Posterior vena cava (tissue), 2 donors: ENCODE measurements at regions of chr20 and their contacts with region 1.

Region 1: DNA sequence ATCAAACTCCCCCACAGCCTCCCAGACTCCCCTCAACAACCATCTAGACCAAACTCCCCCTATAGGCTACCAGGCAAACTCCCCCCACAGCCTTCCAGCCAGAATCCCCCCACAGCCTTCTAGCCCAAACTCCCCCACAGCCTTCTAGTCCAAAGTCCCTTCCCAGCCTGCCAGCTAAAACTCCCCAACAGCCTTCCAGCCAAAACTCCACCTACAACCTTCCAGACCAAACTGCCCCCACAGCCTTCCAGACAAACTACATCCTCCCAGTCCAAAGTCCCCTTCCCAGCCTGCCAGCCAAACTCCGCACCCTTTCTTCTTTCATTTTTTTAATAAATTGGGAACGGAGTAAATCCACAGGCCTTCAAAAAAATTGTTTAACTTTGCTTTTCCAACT is 37.4 kb upstream of the SYNDIG1 start:
- DNase-seq: no peak

Region 2: GRCh38 chr20:24469116-24469893 is 37.3 kb after region 1 on chr20 and contains the start of gene SYNDIG1:
- intact Hi-C with region 1: loop called in 1 of 2 experiments (anchors 1 kb)
- DNase-seq: peak; percentile 90
- total RNA-seq, gene SYNDIG1: 11.3 to 22.5 TPM